ENCODE measurements at regions of chr5 and their contacts with region 1.

Region 1: GRCh38 chr5:107790671-107791070 is 119.9 kb upstream of the EFNA5 start:
- DNase-seq: no peak
- CTCF ChIP-seq: no peak

Region 2: DNA sequence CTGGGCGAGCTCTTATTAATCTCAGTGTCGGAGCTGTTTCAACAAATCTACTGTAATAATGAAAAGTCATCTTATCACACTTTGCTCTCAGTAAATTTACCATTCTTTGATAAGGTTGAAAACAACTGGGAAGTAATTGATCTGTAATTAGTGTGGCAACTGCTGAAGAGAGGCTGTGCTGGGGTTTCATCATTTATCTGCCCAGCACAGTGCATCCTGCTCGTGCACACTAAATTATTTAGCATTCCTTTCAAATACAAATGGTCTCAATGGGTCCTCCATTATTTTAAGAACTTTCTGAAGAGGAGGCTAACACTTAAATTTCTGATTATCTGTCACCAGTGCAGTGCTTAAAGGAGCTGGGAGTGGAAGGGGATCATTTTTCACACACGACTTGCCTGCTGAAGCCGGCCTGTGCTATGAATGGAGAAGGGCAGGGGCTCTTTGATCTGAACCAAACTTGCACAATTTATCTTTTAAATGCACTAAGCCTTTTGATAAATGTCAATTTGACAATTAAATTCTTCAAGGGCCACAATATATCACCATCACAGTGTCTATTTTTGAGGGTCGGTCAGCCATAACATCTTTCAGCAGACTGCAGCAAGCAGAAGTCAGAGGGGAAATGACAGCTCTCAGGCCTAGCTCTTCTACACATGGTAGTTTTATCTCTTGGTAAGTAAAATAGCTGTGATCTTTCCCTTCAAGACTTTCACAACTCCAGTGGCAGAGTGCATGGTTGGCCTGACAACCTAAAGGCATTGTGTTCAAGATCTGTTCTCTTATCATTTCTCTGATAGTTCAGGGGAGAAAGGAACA is 13.5 kb before region 1 on chr5:
- CTCF ChIA-PET with region 1: interaction called, 11 read pairs
- POLR2A ChIA-PET with region 1: no interaction called
- DNase-seq: no peak
- CTCF ChIP-seq: no peak

Measured in GM10248 (cell line).